GM18951 (cell line): ENCODE measurements at regions of chr11 and their contacts with region 1.

Region 1: DNA sequence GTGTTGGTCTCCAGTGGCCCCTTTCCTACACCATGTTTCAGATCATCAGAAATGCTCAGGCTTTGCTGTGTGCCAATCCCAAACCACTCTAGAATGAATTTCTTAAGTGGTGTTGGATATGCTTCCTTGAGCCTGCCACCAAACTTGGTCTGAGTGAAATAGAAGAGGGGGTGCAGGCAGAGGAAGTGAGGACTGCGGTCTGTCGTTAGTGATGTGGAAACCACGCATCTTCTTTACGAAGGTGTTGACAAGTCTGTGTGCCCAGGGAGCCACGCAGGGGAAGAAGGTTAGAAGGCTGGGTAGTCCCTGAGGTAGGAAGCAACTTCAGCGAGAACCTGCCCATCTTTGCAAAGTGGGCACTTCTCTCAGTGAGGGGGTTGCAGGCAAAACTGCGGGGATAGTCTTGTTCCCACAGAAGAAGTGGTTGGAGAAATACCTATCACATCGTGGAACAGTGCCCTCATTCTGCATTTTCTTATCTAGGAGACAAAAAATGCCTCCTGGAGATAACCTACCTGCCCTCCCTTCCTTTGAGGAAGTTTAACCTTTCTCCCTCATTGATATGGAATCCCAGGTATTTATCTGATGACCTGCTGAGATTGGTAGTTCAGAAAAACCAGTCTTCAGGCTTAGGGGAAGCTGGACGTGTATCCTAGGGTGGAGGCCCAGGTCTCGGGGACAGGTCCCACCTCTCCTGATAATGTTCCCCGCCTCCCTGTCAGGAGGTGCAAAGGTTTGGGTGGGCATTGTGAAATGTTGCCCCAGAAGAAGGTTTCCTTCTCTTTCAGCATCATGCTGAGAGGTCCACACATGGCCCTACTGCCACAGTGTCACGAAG is 187.1 kb upstream of the NAV2 start:
- POLR2A ChIP-seq: no peak

Region 2: GRCh38 chr11:19344751-19345518 is 180.6 kb before region 1 on chr11:
- in situ Hi-C with region 1: loop called (anchors 25 kb)
- POLR2A ChIP-seq: no peak

Region 3: GRCh38 chr11:19903620-19904069 is 378.1 kb after region 1 on chr11:
- in situ Hi-C with region 1: no loop called
- POLR2A ChIP-seq: no peak